AG04449 (cell line): ENCODE measurements at regions of chr21 and their contacts with region 1.

Region 1: DNA sequence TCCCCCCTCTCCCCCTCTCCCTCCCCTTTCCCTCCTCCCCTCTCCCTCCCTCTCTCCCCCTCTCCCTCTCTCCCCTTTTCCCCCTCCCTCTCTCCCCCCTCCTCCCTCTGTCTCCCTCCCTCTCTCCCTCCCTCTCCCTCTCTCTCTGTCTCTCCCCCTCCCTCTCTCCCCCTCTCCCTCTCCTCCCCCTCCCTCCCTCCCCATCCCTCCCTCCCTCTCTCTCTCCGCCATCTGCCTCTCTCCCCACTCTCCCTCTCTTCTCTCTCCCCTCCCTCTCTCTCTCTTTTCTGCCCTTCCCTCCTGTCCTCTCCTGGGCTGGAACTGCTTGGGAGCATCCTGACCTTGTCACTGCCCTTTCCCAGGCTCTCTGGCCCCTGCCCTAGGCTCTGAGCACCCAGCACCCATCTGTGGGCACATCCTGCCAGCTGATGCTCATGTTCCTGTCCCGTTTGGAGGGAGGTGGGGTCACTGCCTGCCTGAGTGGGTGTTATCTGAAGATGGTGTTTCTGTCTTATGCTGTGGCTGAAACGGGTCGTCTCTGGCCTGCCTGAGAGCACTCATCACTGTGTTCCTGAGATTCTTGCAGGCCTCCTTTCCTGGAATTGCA is 10.8 kb downstream of the FTCD start:
- DNase-seq: no peak
- H3K4me3 ChIP-seq: no peak overlapping the region
- CTCF ChIP-seq: no peak

Region 2: DNA sequence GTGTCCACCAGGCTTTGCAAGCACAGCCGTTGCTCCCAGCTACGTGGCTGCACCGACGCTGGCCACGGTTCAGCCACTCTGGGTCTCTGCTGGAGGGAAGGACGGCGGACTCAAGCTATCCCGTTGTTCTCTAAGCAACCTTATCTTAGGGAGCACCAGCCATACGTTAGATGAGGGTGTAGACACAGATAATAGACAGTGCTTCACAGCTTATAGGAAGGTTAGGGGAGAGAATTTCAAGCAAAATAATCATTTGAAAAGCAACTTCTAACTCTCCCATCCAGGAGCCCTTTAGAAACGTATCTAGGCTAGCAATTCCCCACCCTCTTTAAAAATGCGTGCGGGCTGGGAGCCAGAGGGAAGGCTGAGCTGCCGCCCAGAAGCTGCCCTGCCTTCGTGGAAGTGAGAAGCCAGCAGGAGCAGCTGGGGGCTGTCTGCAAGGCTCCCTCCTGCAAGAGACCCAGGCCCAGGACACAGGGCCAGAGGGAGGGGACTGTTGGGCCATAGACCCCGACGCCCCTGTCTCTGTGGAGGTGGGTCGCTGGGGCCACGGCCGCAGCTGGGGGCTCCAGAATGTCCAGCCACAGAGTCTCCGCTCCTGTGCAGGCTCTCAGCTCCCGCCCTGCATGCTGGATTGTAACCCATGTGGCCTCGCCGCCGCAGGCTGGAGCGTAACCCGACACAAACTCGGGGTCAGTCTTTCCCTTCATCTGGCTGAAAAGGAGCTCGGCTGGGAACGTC is 77.8 kb before region 1 on chr21:
- CTCF ChIA-PET with region 1: no interaction called
- POLR2A ChIA-PET with region 1: no interaction called
- DNase-seq: no peak
- H3K4me3 ChIP-seq: no peak overlapping the region
- CTCF ChIP-seq: no peak

Region 3: DNA sequence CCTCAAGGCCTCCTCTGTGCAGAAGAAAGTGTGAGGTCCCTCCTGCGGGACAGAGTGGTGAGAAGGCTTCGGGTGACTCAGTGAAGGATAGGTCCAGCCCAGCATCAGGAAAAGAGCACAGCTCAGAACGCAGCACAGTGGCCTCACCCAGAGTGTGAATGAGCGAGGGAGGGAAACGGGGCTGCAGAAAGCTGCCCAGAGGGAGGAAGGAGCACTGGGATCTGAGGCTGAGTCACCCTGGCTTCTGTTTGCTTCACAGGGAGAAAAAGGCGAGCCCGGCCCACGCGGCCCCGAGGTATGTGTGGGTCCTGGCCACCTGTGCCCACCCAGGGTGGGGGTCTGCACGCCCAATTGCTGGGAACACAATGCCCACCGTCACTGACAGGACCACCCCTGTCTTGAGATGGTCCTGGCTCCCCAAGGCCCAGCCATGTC is 22.3 kb before region 1 on chr21:
- CTCF ChIA-PET with region 1: interaction called, 11 read pairs
- POLR2A ChIA-PET with region 1: no interaction called
- DNase-seq: no peak
- H3K4me3 ChIP-seq: no peak overlapping the region
- CTCF ChIP-seq: no peak

Region 4: DNA sequence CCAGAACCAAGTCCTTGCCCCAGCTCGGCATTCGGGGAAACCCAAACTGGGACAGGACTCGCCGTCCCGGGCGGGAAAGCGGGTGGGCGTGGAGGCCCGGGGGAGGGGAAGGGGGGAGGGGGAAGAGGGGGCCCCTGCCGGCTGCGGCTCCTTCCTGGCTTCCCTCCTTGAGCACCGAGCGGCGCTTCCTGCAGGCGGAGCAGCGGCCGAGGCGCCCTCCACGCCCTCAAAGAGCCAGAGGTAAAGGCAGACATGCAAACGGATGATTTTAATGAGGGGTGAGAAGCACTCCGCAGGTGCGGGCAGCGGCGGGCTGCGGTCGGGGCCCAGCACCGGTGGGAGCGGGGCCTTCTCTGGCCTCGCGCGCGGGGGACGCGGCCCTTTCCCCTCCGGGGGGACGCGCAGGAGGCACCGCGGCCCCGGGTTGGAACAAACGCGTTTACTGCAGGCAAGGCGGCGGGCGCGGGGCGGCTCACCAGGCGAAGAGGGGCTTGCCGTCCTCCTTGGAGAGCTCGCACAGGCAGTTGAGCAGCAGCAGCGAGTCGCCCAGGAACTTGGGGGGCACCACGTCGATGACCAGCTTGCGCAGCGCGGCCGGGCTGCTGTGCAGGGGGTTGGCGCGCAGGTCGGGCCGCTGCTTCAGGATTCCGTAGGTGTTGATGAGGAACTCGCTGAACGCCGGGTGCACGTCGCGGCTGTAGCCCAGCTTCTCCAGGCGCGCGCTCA is 16.5 kb after region 1 on chr21:
- CTCF ChIA-PET with region 1: interaction called, 21 read pairs
- POLR2A ChIA-PET with region 1: no interaction called
- DNase-seq: no peak
- H3K4me3 ChIP-seq: peak overlapping the region; percentile 3; the same call in 1 of the 2 replicates
- CTCF ChIP-seq: no peak

Region 5: DNA sequence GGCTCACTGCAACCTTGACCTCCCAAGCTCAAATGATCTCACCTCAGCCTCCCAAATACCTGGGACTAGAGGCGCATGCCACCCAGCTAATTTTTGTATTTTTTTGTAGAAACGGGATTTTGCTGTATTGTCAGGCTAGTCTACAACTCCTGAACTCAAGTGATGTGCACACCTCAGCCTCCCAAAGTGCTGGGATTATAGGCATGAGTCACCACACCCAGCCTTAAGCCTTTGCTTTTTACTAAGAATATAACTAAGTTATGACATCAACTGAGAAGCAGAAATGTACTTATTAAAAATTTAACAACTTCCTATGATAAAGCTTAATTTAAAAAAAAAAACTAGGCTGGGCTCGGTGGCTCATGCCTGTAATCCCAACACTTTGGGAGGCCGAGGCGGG is 92.9 kb after region 1 on chr21:
- CTCF ChIA-PET with region 1: interaction called, 13 read pairs
- POLR2A ChIA-PET with region 1: no interaction called
- DNase-seq: no peak
- H3K4me3 ChIP-seq: no peak overlapping the region
- CTCF ChIP-seq: no peak